T-cell (primary cell): ENCODE measurements at regions of chr15 and their contacts with region 1.

Region 1: GRCh38 chr15:52227456-52227855 is 36.3 kb upstream of the GNB5 start:
- DNase-seq: peak; percentile 34 to 86 (median 59)
- ATAC-seq: peak; percentile 97 to 99 (median 98)
- H3K4me3 ChIP-seq: no peak overlapping the region
- H3K4me3 Mint-ChIP-seq: no peak overlapping the region
- H3K27ac ChIP-seq: no peak overlapping the region
- H3K27ac Mint-ChIP-seq: no peak overlapping the region
- H3K4me1 ChIP-seq: peaks cover 3 to 6% of the 10 kb centered on the region in 2 experiments
- H3K4me1 Mint-ChIP-seq: peaks cover 11 to 21% (median 15%) of the 10 kb centered on the region in 3 donors
- H3K27me3 ChIP-seq: no peaks in the 10 kb centered on the region
- H3K27me3 Mint-ChIP-seq: no peaks in the 10 kb centered on the region

Region 2: DNA sequence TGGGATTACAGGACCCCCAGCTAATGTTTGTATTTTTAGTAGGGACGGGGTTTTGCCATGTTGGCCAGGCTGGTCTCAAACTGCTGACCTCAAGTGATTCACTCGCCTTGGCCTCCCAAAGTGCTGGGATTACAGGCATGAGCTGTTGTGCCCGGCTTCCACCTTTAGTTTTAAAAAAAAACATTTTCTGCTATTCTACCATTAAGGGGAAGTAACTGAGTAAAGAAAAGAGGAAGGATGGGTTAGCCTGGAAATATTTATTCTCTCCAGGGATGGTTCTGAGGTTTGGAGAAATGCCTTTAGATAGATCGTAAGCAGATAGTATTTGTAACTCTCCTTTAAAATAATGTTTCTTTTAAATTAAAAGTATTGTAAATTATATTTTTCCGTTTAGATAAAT is 1315.8 kb before region 1 on chr15:
- CTCF ChIA-PET with region 1: no interaction called
- POLR2A ChIA-PET with region 1: no interaction called
- DNase-seq: no peak
- ATAC-seq: no peak
- H3K4me3 ChIP-seq: no peak overlapping the region
- H3K4me3 Mint-ChIP-seq: no peak overlapping the region
- H3K27ac ChIP-seq: no peak overlapping the region
- H3K27ac Mint-ChIP-seq: no peak overlapping the region
- H3K4me1 ChIP-seq: peaks cover 9 to 14% of the 10 kb centered on the region in 2 experiments
- H3K4me1 Mint-ChIP-seq: peaks cover 27 to 32% (median 29%) of the 10 kb centered on the region in 3 donors
- H3K27me3 ChIP-seq: no peaks in the 10 kb centered on the region
- H3K27me3 Mint-ChIP-seq: no peaks in the 10 kb centered on the region

Region 3: GRCh38 chr15:52179278-52180195 is 47.9 kb before region 1 on chr15:
- CTCF ChIA-PET with region 1: interaction called in 1 of 2 experiments, 11 read pairs
- POLR2A ChIA-PET with region 1: interaction called in 1 of 2 experiments, 4 read pairs
- DNase-seq: peak; percentile 71 to 92 (median 88)
- ATAC-seq: peak; percentile 82 to 90 (median 88)
- H3K4me3 ChIP-seq: peak overlapping the region; percentile 92 to 93
- H3K4me3 Mint-ChIP-seq: peak overlapping the region; percentile 84 to 94 (median 93)
- H3K27ac ChIP-seq: peak overlapping the region; percentile 98
- H3K27ac Mint-ChIP-seq: peak overlapping the region; percentile 97
- H3K4me1 ChIP-seq: peaks cover 9 to 26% of the 10 kb centered on the region in 2 experiments
- H3K4me1 Mint-ChIP-seq: peaks cover 37 to 48% (median 43%) of the 10 kb centered on the region in 3 donors
- H3K27me3 ChIP-seq: no peaks in the 10 kb centered on the region
- H3K27me3 Mint-ChIP-seq: no peaks in the 10 kb centered on the region

Region 4: GRCh38 chr15:52208306-52208946 is 19.0 kb before region 1 on chr15:
- CTCF ChIA-PET with region 1: interaction called, 8 to 14 read pairs
- POLR2A ChIA-PET with region 1: interaction called, 3 to 4 read pairs
- DNase-seq: peak; percentile 43 to 81 (median 70)
- ATAC-seq: peak; percentile 88 to 100 (median 94)
- H3K4me3 ChIP-seq: no peak overlapping the region
- H3K4me3 Mint-ChIP-seq: no peak overlapping the region
- H3K27ac ChIP-seq: no peak overlapping the region
- H3K27ac Mint-ChIP-seq: no peak overlapping the region
- H3K4me1 ChIP-seq: no peaks in the 10 kb centered on the region
- H3K4me1 Mint-ChIP-seq: no peaks in the 10 kb centered on the region
- H3K27me3 ChIP-seq: no peaks in the 10 kb centered on the region
- H3K27me3 Mint-ChIP-seq: no peaks in the 10 kb centered on the region

Region 5: DNA sequence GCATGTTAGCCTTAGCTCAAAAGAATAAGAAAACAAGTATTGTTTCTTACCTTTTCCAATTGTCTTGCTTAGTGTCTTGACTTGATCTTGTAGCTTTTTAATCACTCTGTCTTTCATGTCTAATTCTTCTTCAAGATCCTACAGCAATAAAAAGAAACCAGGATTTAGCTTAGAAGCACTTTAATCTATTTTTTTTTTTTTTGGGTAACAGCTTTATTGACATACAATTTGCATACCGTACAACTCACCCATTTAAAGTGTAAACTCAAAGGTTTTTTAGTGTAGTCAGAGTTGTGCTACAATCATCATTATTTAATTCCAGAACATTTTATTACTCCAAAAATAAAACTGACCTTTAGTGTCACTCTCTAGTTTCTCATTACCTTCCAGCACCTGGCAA is 12.9 kb before region 1 on chr15:
- CTCF ChIA-PET with region 1: interaction called, 8 to 10 read pairs
- POLR2A ChIA-PET with region 1: no interaction called
- DNase-seq: no peak
- ATAC-seq: no peak
- H3K4me3 ChIP-seq: no peak overlapping the region
- H3K4me3 Mint-ChIP-seq: no peak overlapping the region
- H3K27ac ChIP-seq: no peak overlapping the region
- H3K27ac Mint-ChIP-seq: no peak overlapping the region
- H3K4me1 ChIP-seq: peaks cover 0 to 3% of the 10 kb centered on the region in 2 experiments
- H3K4me1 Mint-ChIP-seq: peaks cover 0 to 3% (median under 1%) of the 10 kb centered on the region in 3 donors
- H3K27me3 ChIP-seq: no peaks in the 10 kb centered on the region
- H3K27me3 Mint-ChIP-seq: no peaks in the 10 kb centered on the region